ENCODE measurements at regions of chr16 and their contacts with region 1.

Region 1: DNA sequence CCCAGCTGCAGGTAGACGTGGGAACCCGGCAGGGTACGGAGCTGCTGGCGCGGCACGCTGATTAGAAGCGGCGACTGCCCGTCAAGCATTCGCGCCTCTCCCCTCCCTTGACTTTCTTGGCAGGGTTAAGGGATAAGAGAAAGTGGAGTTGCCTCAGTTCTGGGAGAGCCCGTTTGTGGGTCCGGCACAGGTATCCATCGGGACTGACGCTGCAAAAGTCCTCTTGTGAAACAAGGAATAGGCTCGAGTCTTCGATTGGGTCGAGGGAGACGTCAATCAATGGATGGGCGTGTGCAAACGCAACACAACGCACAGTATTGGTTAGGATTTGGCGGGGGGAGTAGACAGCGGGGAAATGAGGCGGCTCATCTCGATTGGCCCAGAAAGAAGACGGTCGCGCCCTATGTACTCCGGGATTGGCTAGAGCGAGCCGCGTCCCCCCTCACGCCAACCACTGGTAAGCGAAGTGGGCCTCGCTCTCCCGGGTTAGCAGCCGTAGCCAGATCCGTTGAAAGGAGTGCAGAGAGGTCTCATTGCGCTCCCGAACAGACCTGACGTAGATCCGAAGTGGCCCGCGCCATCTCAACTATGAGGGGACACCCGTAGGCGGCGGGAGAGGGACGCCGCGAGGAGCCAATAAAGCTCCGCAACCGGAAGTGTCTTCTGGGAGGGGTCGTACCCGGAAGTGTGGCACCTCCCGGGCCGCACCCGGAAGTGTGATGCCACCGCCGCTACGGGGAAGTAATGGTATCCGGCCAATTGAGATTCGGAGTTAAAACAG is at the start of gene MON1B:
- DNase-seq: peak; percentile 96
- ATAC-seq: peak; percentile 99
- H3K4me3 Mint-ChIP-seq: peak within 1 kb of the TSS; percentile 99
- H3K27ac Mint-ChIP-seq: peak within 1 kb of the TSS; percentile 98
- H3K4me1 Mint-ChIP-seq: peaks cover 29% of the 10 kb centered on the region
- H3K27me3 Mint-ChIP-seq: peaks cover 2% of the 10 kb centered on the region
- total RNA-seq, gene MON1B: 58.0 to 63.4 TPM

Region 2: DNA sequence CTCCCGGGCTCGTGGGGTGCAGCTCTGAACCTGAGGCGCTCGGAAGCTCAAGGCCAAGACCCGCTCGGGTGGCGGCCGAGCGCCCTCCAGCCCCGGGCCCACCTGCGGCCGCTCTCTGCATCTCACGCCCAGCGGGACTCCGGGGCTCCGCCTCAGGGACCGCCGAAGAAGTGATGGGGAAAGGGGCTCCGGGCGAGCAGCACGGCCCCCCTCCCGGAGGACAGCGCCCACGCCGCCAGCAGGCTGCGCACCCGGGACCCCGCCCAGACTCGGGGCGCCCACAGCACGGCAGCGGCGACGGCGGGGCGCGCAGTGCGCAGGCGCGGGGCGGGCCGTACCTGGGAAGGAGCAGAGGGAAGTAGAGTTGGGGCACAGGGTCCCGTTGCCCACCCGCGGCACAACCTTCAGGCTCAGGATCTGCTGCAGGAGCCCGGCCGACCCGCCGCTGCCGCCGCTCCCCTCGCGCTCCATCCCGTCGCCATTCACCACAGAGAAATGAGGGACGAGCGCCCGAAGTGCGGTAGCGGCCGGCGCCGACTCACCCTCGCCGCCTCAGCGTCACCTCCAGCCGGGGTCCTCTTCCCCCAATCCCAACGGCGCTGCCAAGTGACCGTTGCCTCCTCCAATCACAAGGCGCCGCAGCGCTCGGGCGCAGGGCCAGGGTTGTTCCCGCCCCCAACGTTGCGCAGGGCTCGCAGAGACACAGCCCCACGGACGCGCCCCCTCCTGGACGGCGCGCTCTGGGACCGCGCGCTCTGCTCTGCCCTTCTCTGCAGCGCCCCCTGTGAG is 1726.3 kb before region 1 on chr16 and contains the start of gene TMEM170A:
- CTCF ChIA-PET with region 1: no interaction called
- POLR2A ChIA-PET with region 1: no interaction called
- intact Hi-C with region 1: loop called in 1 of 2 experiments (anchors 1 kb)
- DNase-seq: peak; percentile 100
- ATAC-seq: peak; percentile 94
- H3K4me3 Mint-ChIP-seq: peak within 1 kb of the TSS; percentile 98
- H3K27ac Mint-ChIP-seq: peak within 1 kb of the TSS; percentile 94
- H3K4me1 Mint-ChIP-seq: peaks cover 45% of the 10 kb centered on the region
- H3K27me3 Mint-ChIP-seq: no peaks in the 10 kb centered on the region
- total RNA-seq, gene TMEM170A: 22.0 to 30.5 TPM

Region 3: GRCh38 chr16:75555707-75556430 is 1634.8 kb before region 1 on chr16 and contains the start of gene TMEM231:
- CTCF ChIA-PET with region 1: no interaction called
- POLR2A ChIA-PET with region 1: no interaction called
- intact Hi-C with region 1: loop called in 1 of 2 experiments (anchors 2 kb)
- DNase-seq: peak; percentile 99
- ATAC-seq: peak; percentile 98
- H3K4me3 Mint-ChIP-seq: peak within 1 kb of the TSS; percentile 79
- H3K27ac Mint-ChIP-seq: peak within 1 kb of the TSS; percentile 71
- H3K4me1 Mint-ChIP-seq: peaks cover 7% of the 10 kb centered on the region
- H3K27me3 Mint-ChIP-seq: peaks cover 3% of the 10 kb centered on the region
- total RNA-seq, gene TMEM231: 3.6 to 4.1 TPM

Region 4: DNA sequence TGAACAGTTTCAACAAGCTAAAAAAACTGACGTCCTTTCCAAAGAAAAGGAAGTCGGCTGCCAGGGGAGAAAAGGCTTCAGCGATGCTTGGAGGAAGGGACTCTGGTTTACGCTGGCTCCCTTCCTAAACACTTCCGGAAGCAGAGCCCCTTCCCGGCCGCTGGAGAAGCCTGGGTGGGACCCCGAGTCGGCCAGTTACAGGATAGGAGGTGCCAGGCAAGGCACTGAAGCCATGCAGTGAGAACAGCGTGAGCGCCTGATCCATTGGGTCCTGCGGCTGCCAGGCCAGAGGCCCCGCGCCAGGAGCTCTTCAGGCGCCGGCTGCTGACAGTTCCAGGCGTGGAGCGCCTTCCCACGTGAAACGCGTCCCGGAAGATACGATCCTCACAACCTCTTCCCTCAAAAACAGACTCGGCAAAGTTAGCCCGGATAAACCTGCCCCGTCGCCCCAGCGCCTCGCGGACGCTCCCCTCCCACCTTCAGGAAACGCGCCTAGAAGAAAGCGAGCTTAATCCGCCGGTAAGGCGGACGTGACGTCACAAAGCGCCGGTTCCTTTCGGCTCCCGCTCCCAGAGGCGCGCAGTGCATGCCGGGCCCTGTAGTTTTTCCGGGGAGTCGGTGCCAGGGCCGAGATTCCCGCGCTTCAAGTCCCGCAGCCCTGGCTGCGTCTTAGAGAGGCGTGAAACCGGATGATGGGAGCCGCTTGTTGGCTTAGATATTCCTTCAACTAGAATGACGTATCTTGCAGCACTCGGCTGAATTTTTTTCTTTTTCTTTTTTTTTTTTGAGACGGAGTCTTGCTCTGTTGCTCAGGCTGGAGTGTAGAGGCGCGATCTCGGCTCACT is 1567.7 kb before region 1 on chr16 and contains the start of gene ADAT1:
- CTCF ChIA-PET with region 1: no interaction called
- POLR2A ChIA-PET with region 1: interaction called, 4 read pairs
- intact Hi-C with region 1: loop called in 1 of 2 experiments (anchors 1 kb)
- DNase-seq: peak; percentile 99
- ATAC-seq: peak; percentile 94
- H3K4me3 Mint-ChIP-seq: peak within 1 kb of the TSS; percentile 93
- H3K27ac Mint-ChIP-seq: peak within 1 kb of the TSS; percentile 95
- H3K4me1 Mint-ChIP-seq: peaks cover 45% of the 10 kb centered on the region
- H3K27me3 Mint-ChIP-seq: no peaks in the 10 kb centered on the region
- total RNA-seq, gene ADAT1: 48.3 to 55.7 TPM

Region 5: GRCh38 chr16:75983741-75984381 is 1206.8 kb before region 1 on chr16:
- CTCF ChIA-PET with region 1: no interaction called
- POLR2A ChIA-PET with region 1: no interaction called
- intact Hi-C with region 1: no loop called
- DNase-seq: no peak
- ATAC-seq: no peak
- H3K4me3 Mint-ChIP-seq: no peak overlapping the region
- H3K27ac Mint-ChIP-seq: no peak overlapping the region
- H3K4me1 Mint-ChIP-seq: no peaks in the 10 kb centered on the region
- H3K27me3 Mint-ChIP-seq: no peaks in the 10 kb centered on the region

Region 6: GRCh38 chr16:76824221-76824620 is 366.4 kb before region 1 on chr16:
- CTCF ChIA-PET with region 1: no interaction called
- POLR2A ChIA-PET with region 1: no interaction called
- intact Hi-C with region 1: no loop called
- DNase-seq: no peak
- ATAC-seq: no peak
- H3K4me3 Mint-ChIP-seq: no peak overlapping the region
- H3K27ac Mint-ChIP-seq: no peak overlapping the region
- H3K4me1 Mint-ChIP-seq: no peaks in the 10 kb centered on the region
- H3K27me3 Mint-ChIP-seq: no peaks in the 10 kb centered on the region

Region 7: DNA sequence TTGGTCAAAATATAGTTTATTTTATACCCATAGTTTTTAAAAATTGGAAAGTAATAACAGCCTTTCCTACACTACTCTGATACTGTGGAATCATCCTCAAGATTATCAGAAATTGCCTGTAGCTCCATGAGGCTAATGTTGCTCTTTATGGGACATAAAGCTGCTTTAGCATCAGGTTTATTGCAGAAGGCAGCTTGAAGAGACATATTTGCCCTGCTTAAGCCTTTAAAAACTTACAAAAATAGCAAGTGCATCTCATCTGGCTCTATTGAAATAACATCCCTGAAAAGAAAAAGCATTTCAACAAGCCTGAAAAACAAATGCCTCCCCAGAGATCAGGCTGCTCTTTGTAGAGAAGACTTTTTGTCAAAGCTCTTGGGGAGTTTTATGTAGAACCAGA is 142.6 kb before region 1 on chr16:
- CTCF ChIA-PET with region 1: no interaction called
- POLR2A ChIA-PET with region 1: no interaction called
- intact Hi-C with region 1: no loop called
- DNase-seq: no peak
- ATAC-seq: no peak
- H3K4me3 Mint-ChIP-seq: no peak overlapping the region
- H3K27ac Mint-ChIP-seq: no peak overlapping the region
- H3K4me1 Mint-ChIP-seq: no peaks in the 10 kb centered on the region
- H3K27me3 Mint-ChIP-seq: peaks cover 6% of the 10 kb centered on the region

Region 8: DNA sequence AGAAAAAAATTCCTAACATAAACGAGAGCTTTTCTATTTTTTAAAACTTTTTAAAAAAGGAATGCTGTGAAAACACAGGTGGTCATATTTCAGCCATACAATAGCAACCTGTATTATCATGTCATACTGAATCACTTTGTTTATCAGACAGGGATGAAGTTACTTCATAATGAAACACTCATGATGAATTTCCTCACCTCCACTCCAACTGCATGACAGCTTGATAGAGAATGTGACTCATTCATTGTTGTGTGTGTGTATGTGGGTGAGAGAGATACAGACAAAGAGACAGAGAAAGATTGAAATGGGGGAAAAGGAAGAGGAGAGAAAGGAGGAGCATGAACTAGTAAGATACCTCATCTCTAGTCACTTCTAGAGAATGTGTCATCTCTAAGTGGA is 117.5 kb after region 1 on chr16:
- CTCF ChIA-PET with region 1: no interaction called
- POLR2A ChIA-PET with region 1: no interaction called
- intact Hi-C with region 1: loop called in 1 of 2 experiments (anchors 1 kb)
- DNase-seq: no peak
- ATAC-seq: peak; percentile 95
- H3K4me3 Mint-ChIP-seq: no peak overlapping the region
- H3K27ac Mint-ChIP-seq: peak overlapping the region; percentile 73
- H3K4me1 Mint-ChIP-seq: peaks cover 28% of the 10 kb centered on the region
- H3K27me3 Mint-ChIP-seq: peaks cover 14% of the 10 kb centered on the region

Region 9: DNA sequence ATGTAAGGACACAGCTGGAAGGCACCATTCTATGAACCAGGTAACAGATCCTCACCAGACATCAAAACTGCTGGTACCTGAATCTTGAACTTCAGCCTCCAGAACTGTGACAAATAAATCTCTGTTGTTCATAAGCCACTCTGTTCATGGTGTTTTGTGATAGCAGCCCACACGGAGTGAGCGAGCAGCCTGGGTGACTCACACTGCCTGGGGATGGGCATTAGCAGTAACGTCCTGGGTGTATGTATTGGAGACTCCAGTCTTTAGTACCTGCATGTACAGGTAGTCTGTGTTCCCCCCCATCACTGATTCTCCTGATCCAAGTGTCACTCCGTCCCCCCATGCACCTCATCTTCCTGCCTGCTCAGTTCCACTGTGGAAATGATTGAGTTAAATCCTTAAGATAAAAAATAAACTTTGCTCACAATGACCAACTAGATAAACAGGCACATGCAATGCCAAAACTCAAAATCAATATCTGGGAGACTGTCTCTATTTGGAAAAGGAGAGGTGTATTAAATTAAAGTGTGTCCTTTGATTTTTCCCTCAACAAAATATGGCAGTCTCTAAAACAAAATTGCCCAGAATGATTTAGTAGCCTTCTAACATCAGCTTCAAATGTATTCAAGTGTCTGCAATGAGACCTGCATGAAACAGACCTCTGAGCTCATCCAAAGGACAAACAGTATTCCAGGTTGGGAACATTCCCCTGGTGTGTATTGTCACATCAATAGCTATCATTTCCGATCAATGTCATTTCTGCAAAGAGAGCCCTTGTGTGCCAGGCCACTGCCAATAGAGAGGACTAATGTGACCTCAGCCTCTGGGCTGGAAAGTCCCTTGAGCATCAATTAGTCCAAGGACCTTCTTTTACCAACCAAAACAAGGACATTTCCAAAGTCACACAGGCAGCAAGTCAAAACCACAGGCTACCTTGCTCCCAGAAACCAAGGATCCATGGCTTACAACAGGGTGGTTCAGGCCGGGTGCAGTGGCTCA is 585.5 kb after region 1 on chr16:
- CTCF ChIA-PET with region 1: no interaction called
- POLR2A ChIA-PET with region 1: no interaction called
- intact Hi-C with region 1: no loop called
- DNase-seq: no peak
- ATAC-seq: no peak
- H3K4me3 Mint-ChIP-seq: no peak overlapping the region
- H3K27ac Mint-ChIP-seq: no peak overlapping the region
- H3K4me1 Mint-ChIP-seq: no peaks in the 10 kb centered on the region
- H3K27me3 Mint-ChIP-seq: peaks cover 13% of the 10 kb centered on the region

Region 10: DNA sequence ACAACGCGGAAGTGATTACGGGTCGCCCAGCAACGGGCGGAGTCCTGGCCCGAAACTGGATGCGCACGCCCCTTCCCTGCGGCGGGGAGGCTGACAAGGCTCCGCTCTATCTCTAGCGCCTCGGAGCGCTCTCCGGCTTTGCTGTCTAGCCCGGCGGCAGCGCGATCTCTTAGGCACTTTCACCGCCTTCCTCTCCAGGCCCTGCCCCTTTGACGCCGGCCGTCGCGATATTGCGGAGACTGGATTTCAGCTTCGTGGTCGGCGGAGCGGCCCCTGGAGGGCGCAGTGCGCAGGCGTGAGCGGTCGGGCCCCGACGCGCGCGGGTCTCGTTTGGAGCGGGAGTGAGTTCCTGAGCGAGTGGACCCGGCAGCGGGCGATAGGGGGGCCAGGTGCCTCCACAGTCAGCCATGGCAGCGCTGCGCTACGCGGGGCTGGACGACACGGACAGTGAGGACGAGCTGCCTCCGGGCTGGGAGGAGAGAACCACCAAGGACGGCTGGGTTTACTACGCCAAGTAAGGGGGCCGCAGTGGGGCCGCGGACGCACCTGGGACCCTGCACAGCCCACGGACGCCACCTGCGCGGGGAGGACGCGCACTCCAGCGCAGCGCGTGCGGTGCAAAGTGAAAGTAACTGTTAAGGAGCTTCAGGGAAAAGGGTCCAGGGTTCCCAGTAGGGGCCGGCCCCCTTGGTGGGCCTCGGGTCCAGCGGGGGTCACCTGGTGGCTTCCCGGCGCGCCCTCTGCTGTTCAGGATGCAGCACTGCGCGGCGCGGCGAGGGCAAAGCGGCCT is 908.9 kb after region 1 on chr16 and contains the start of gene WWOX:
- CTCF ChIA-PET with region 1: interaction called, 3 read pairs
- POLR2A ChIA-PET with region 1: no interaction called
- intact Hi-C with region 1: loop called in 1 of 2 experiments (anchors 1 kb)
- DNase-seq: peak; percentile 97
- ATAC-seq: peak; percentile 97
- H3K4me3 Mint-ChIP-seq: peak within 1 kb of the TSS; percentile 79
- H3K27ac Mint-ChIP-seq: peak within 1 kb of the TSS; percentile 86
- H3K4me1 Mint-ChIP-seq: peaks cover 13% of the 10 kb centered on the region
- H3K27me3 Mint-ChIP-seq: no peaks in the 10 kb centered on the region
- total RNA-seq, gene WWOX: 19.9 to 29.4 TPM

Measured in activated CD4-positive, alpha-beta T cell treated with anti-CD3 and anti-CD28 coated beads for 36 hours (primary cell).